Caco-2 (cell line): ENCODE measurements at regions of chr7 and their contacts with region 1.

Region 1: GRCh38 chr7:108181073-108181985 is 51.2 kb upstream of the LAMB4 start:
- DNase-seq: peak in 1 of 2 experiments; percentile 71
- H3K4me3 ChIP-seq: no peak overlapping the region
- H3K4me3 Mint-ChIP-seq: no peak overlapping the region
- H3K27ac Mint-ChIP-seq: no peak overlapping the region
- H3K4me1 ChIP-seq: peaks cover 4% of the 10 kb centered on the region; the same call in 1 of the 2 replicates
- H3K4me1 Mint-ChIP-seq: no peaks in the 10 kb centered on the region
- H3K27me3 ChIP-seq: no peaks in the 10 kb centered on the region
- H3K27me3 Mint-ChIP-seq: no peaks in the 10 kb centered on the region
- CTCF ChIP-seq: peak; percentile 62 to 80

Region 2: DNA sequence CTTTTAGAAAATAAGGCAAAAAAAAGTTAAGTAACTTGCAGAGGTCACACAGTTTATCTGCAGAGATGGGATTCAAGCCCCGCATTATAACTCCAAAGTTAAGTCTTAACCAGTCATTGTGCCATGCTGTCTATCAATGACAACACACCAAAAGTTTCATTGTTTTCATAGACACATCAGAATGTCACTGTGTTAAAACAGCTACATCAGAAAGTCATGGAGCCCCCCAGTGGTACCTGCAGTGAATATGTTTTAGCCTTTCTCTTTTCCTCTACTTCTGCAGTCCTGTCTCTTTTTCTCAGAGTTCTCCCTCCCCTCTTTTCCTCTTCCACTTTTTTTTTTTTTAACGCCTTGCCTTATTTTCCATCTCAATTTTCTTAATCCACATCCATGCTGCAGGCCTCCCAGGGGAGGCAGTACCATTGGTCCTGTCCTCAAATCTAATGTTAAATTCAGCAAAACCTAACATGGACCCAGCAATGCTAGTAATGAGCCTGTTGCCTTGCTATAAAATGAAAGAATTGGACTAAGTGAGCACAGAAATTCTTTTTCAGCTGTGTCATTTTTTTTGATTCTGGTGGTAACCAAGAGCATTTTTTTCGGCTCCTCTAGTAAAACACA is 278.7 kb after region 1 on chr7:
- CTCF ChIA-PET with region 1: no interaction called
- POLR2A ChIA-PET with region 1: no interaction called
- intact Hi-C with region 1: loop called (anchors 1 kb)
- DNase-seq: peak in 1 of 2 experiments; percentile 68
- H3K4me3 ChIP-seq: no peak overlapping the region
- H3K4me3 Mint-ChIP-seq: no peak overlapping the region
- H3K27ac Mint-ChIP-seq: no peak overlapping the region
- H3K4me1 ChIP-seq: 0 out of 2 replicates have a peak, but pooled peaks cover 3% of the 10 kb centered on the region
- H3K4me1 Mint-ChIP-seq: peaks cover 17% of the 10 kb centered on the region
- H3K27me3 ChIP-seq: no peaks in the 10 kb centered on the region
- H3K27me3 Mint-ChIP-seq: no peaks in the 10 kb centered on the region
- CTCF ChIP-seq: peak; percentile 65 to 69